MCF 10A (cell line): ENCODE measurements at regions of chr6 and their contacts with region 1.

Region 1: GRCh38 chr6:122869437-122870024 is 80.5 kb downstream of the SMPDL3A start:
- DNase-seq: peak; percentile 79
- H3K4me3 Mint-ChIP-seq: no peak overlapping the region
- H3K27ac Mint-ChIP-seq: no peak overlapping the region
- H3K4me1 Mint-ChIP-seq: peaks cover 5% of the 10 kb centered on the region
- H3K27me3 Mint-ChIP-seq: peaks cover 18% of the 10 kb centered on the region
- CTCF ChIP-seq: peak; percentile 83

Region 2: DNA sequence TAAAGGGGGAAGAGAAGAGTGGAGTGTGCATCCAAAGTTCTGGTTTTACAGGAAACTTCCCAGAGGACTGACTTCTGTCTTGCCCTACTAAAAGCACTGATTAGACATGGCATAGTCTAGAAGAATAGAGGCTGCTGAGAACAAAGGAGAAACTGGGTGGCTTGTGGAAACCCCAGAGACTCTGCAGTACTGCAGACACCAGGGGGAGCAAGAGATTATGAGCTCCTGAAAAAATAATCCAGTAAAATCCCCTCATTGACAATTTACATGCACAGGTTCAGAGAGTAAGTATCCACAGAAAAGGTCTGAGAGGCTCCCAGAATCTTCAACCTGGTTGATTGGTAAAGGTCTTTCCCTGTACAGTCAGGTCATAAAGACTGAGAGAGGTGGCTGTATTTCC is 77.8 kb after region 1 on chr6:
- CTCF ChIA-PET with region 1: interaction called, 9 read pairs
- POLR2A ChIA-PET with region 1: no interaction called
- intact Hi-C with region 1: loop called (anchors 1 kb)
- DNase-seq: peak; percentile 47
- H3K4me3 Mint-ChIP-seq: no peak overlapping the region
- H3K27ac Mint-ChIP-seq: no peak overlapping the region
- H3K4me1 Mint-ChIP-seq: no peaks in the 10 kb centered on the region
- H3K27me3 Mint-ChIP-seq: no peaks in the 10 kb centered on the region
- CTCF ChIP-seq: peak; percentile 59

Region 3: DNA sequence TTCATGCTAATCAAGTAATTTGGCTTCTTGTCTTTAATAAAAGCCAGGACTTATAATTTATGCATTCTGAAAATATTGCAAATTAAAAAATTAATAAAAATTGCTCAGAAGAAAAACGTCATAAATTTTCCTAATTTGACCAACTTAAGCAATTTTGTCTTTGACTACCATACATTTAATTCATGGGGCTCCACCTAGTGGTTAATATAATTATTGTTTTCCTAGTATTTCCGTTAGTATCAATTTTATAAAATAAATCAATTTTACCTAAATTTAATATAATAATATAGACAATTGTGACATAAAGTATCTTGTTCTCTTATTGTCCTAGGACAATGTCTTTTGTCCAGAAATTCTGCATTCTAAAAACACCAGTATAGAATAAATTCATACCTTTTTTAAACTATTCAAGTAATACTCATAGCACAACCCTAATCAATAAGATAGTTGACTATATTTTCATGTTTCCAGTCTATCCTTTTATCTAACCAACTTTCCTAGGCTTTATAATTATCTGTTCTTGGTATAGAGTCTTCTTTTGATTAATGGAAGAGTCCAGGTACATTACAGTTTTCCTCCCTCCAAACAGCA is 447.3 kb after region 1 on chr6:
- CTCF ChIA-PET with region 1: interaction called, 127 read pairs
- POLR2A ChIA-PET with region 1: interaction called, 5 read pairs
- intact Hi-C with region 1: loop called (anchors 1 kb)
- DNase-seq: peak; percentile 33
- H3K4me3 Mint-ChIP-seq: no peak overlapping the region
- H3K27ac Mint-ChIP-seq: no peak overlapping the region
- H3K4me1 Mint-ChIP-seq: no peaks in the 10 kb centered on the region
- H3K27me3 Mint-ChIP-seq: no peaks in the 10 kb centered on the region
- CTCF ChIP-seq: peak; percentile 53

Region 4: DNA sequence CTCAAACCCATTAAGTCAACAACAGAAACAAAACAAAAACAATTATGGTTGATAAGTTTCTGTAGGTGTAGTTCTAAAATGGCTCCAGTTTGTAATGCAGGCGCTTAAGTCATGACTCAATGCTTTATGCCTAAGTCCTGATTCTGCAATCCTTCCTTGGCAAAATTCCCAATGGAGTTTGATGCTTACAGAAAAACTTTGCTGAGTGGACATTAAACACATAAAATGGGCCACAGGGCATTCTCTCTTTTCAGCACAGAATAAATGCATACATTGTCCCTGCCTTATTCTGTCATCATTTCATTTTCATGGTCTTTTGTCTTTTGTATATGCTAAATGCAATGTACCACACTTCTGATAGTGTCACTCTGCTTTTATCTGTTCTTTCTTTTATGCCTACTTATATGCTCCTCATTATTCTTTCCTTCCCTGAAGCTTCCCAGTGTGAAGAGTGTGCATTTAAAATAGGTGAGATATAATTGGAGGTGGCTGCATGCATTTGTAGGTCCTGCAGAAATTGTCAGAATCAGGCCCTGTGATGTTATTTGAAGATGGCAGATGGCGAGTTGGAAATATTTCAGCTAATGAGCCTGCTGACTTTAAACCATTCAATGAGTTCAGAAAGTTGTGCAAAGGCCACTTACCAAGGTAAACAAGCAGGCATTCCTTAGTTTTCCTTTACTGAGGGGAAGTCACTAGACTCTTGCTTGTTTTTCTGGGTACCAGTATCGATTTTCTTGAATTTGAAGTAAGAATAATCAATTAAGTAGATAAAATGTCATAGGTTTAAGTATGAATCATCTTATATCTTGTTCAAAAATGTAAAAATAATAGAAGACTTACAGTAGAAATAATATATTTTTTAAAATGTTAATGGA is 454.2 kb after region 1 on chr6:
- CTCF ChIA-PET with region 1: interaction called, 127 read pairs
- POLR2A ChIA-PET with region 1: interaction called, 3 read pairs
- intact Hi-C with region 1: no loop called
- DNase-seq: peak; percentile 86
- H3K4me3 Mint-ChIP-seq: no peak overlapping the region
- H3K27ac Mint-ChIP-seq: no peak overlapping the region
- H3K4me1 Mint-ChIP-seq: peaks cover 10% of the 10 kb centered on the region
- H3K27me3 Mint-ChIP-seq: peaks cover 12% of the 10 kb centered on the region
- CTCF ChIP-seq: no peak

Region 5: GRCh38 chr6:123380257-123380656 is 510.7 kb after region 1 on chr6:
- CTCF ChIA-PET with region 1: interaction called, 58 read pairs
- POLR2A ChIA-PET with region 1: interaction called, 4 read pairs
- intact Hi-C with region 1: loop called (anchors 1 kb)
- DNase-seq: peak; percentile 56
- H3K4me3 Mint-ChIP-seq: no peak overlapping the region
- H3K27ac Mint-ChIP-seq: no peak overlapping the region
- H3K4me1 Mint-ChIP-seq: no peaks in the 10 kb centered on the region
- H3K27me3 Mint-ChIP-seq: no peaks in the 10 kb centered on the region
- CTCF ChIP-seq: peak; percentile 34

Region 6: GRCh38 chr6:123393328-123393727 is 523.8 kb after region 1 on chr6:
- CTCF ChIA-PET with region 1: interaction called, 17 read pairs
- POLR2A ChIA-PET with region 1: no interaction called
- intact Hi-C with region 1: no loop called
- DNase-seq: peak; percentile 47
- H3K4me3 Mint-ChIP-seq: no peak overlapping the region
- H3K27ac Mint-ChIP-seq: no peak overlapping the region
- H3K4me1 Mint-ChIP-seq: no peaks in the 10 kb centered on the region
- H3K27me3 Mint-ChIP-seq: peaks cover 35% of the 10 kb centered on the region
- CTCF ChIP-seq: peak; percentile 42

Region 7: DNA sequence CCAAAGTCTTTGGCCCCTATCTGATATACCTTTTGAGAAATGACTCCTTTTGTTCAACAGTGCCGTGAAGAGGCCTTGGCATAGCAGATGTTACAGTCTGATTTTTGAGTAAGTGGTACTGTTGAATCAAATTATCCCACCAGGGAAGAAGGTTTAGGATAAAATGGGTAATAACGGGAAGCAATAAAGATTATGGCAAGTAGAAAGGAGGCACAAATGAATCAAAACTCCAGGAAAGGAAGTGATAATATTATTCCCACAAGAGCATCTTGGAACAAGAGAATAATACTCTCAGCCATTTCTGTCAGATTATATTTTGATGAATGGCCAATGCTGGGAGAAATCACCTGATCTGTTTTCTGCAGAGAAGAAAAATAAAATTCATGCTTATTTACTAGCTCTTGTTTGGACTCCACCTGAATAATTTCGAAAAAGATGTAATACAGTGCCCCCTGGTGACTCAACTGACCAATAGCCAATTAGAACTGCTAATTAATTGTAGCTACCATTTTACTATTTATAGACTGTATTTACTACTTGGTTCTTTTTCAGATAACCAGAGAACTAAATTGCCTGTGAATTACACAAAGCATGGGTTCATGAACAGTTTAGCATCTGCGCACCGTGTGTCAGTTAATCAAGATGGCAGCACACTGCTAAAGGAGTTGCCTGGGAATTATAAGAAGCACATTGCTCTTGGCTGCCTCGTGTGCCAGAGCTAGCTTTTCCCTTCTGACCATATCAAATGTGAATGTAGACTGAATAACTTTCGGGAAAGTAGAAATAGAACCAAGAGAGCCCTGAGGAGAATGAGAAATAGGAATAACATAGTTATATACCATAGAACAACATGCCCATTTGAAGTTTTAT is 845.7 kb after region 1 on chr6:
- CTCF ChIA-PET with region 1: interaction called, 17 read pairs
- POLR2A ChIA-PET with region 1: no interaction called
- intact Hi-C with region 1: loop called (anchors 1 kb)
- DNase-seq: peak; percentile 51
- H3K4me3 Mint-ChIP-seq: no peak overlapping the region
- H3K27ac Mint-ChIP-seq: no peak overlapping the region
- H3K4me1 Mint-ChIP-seq: no peaks in the 10 kb centered on the region
- H3K27me3 Mint-ChIP-seq: peaks cover 47% of the 10 kb centered on the region
- CTCF ChIP-seq: peak; percentile 61

Region 8: DNA sequence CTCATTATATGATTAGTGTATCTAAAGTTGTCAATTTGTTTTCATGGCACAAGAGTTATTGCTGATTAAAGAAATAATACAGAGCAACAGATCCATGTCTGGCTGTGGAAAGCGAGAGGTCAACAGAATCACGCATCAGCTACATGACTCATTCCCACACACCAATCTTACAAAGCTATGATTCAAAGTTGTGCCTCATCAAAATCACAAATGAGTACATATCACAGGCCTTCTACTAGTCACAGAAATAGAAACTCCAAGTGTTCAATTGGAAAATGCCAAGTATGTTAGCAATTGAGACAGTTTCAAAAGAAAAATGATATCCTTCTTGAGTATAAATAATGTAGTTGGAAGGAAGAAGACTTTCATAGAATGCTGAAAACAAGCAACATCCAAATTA is 876.4 kb after region 1 on chr6:
- CTCF ChIA-PET with region 1: no interaction called
- POLR2A ChIA-PET with region 1: no interaction called
- intact Hi-C with region 1: no loop called
- DNase-seq: peak; percentile 49
- H3K4me3 Mint-ChIP-seq: no peak overlapping the region
- H3K27ac Mint-ChIP-seq: no peak overlapping the region
- H3K4me1 Mint-ChIP-seq: peaks cover 4% of the 10 kb centered on the region
- H3K27me3 Mint-ChIP-seq: no peaks in the 10 kb centered on the region
- CTCF ChIP-seq: no peak